GM23248 (cell line): ENCODE measurements at regions of chr9 and their contacts with region 1.

Region 1: DNA sequence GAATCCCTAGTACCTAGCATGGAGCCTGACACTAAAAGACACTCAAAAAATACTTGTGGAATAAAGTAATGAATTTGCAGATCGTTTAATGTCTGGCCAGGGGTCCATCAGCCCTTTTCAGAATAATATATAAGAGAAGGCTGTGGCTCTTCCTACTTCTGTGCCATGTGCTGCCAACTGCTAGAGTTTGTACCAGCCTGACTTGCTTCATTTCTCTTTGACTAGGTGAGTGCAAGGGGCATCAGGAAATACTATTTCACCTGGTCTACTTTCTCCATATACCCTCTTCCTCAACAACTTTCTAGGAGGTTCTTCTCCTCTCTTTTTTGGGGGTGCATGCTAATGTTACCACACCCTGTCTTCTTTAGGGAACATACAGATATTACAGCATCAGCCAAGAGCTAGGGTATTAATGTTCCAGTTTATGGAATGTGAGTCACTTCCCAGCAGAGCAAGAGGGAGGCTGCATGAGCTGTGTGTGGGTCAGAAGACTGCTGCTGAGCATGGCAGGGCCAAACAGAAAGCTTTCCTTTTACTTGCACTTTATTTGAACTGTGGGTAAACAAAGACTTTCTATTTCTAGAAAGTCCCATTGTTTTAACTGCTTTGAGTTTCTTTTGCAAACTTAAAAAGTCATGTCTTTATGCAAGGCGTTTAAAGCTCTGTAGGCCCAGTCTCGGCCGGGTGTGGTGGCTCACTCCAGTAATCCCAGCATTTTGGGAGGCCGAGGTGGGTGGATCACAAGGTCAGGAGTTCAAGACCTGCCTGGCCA is 158.9 kb downstream of the ADAMTSL1 start:
- DNase-seq: peak; percentile 92
- H3K4me3 ChIP-seq: peak overlapping the region; percentile 40; the same call in 1 of the 2 replicates
- H3K27ac ChIP-seq: peak overlapping the region; percentile 92
- H3K4me1 ChIP-seq: peaks cover 39% of the 10 kb centered on the region
- H3K27me3 ChIP-seq: no peaks in the 10 kb centered on the region

Region 2: GRCh38 chr9:18319918-18320445 is 312.8 kb before region 1 on chr9:
- in situ Hi-C with region 1: no loop called
- DNase-seq: no peak
- H3K4me3 ChIP-seq: no peak overlapping the region
- H3K27ac ChIP-seq: no peak overlapping the region
- H3K4me1 ChIP-seq: no peaks in the 10 kb centered on the region
- H3K27me3 ChIP-seq: no peaks in the 10 kb centered on the region

Region 3: DNA sequence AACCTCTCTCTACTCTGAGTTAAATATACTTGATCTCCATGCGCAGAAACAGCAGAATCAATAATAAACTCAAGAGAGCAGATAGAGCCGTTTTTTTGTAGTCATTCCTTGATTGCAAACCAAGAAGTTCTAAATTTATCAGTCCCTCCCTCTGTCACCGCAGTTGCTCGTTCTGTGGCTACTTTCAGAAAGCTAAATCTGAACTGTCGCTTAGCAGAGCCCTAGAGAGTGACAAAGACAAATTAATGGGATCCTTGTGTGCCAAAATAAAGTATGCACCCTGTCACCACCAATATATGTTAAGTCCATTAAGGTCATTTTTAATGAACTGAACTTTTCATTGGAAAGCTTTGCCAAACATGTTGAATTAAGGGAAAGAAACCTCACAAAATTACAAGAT is 59.5 kb after region 1 on chr9:
- in situ Hi-C with region 1: loop called (anchors 10 kb)
- DNase-seq: no peak
- H3K4me3 ChIP-seq: no peak overlapping the region
- H3K27ac ChIP-seq: no peak overlapping the region
- H3K4me1 ChIP-seq: no peaks in the 10 kb centered on the region; the same call in 1 of the 2 replicates
- H3K27me3 ChIP-seq: no peaks in the 10 kb centered on the region